ENCODE measurements at regions of chr3 and their contacts with region 1.

Region 1: DNA sequence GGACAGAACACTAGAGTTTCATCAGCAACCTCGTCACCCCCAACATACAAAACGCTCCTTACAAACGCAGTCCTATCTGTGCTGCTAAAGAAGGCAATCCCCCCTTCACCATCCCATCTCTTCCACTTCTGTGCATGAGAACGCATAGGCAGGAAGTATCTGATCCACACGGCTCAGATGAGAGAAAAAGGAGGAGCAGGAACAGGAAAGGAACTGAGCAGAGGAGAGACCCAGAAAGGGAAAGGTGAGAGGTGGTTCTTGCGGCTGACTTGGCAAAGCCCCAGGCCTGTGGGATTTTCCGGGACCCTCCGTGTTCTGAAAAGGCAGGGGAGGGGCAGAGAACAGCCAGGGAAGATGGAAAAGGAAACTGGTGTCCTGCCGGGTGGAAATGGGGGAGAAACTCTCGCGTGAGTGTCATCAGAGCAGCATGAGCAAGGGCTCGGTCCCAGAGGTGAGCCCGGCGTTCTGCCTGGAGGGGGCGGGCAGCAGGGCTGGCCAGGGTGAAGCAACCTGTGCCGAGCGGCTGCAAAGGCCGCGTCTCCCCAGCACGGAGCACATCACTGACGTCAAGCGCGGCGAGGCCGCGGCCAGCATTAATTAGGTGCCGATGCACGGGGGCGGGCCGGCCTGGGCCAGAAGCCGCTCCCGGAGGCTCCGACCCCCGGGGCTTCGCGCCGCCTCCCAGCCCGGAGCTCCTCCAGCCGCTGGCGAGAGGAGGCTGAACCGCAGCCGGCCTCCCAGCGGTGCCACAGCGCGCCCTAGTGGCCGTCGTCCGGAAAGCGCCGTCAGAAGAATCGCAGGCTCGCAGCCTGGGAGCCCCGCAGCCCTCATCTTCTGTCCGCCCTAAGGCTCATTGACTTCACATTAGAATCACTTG is 35.8 kb downstream of the CPN2 start:
- DNase-seq: peak; percentile 93 to 96 (median 95)
- ATAC-seq: peak; percentile 91 to 95
- H3K4me3 ChIP-seq: peak overlapping the region; percentile 41
- H3K27ac ChIP-seq: no peak overlapping the region
- H3K4me1 ChIP-seq: peaks cover 2% of the 10 kb centered on the region
- H3K27me3 ChIP-seq: no peaks in the 10 kb centered on the region

Region 2: GRCh38 chr3:193780810-193781472 is 534.4 kb before region 1 on chr3:
- intact Hi-C with region 1: loop called (anchors 2 to 5 kb)
- DNase-seq: peak; percentile 81 to 90 (median 89)
- ATAC-seq: peak; percentile 87 to 92
- H3K4me3 ChIP-seq: no peak overlapping the region
- H3K27ac ChIP-seq: no peak overlapping the region
- H3K4me1 ChIP-seq: peaks cover 2% of the 10 kb centered on the region
- H3K27me3 ChIP-seq: peaks cover 2% of the 10 kb centered on the region

Region 3: GRCh38 chr3:193788189-193788991 is 526.9 kb before region 1 on chr3:
- intact Hi-C with region 1: loop called (anchors 2 to 5 kb)
- DNase-seq: peak; percentile 73 to 89 (median 81)
- ATAC-seq: peak; percentile 93
- H3K4me3 ChIP-seq: no peak overlapping the region
- H3K27ac ChIP-seq: peak overlapping the region; percentile 2
- H3K4me1 ChIP-seq: peaks cover 3% of the 10 kb centered on the region
- H3K27me3 ChIP-seq: no peaks in the 10 kb centered on the region

Region 4: GRCh38 chr3:194003125-194004057 is 311.9 kb before region 1 on chr3:
- intact Hi-C with region 1: loop called in 1 of 4 experiments (anchors 10 kb)
- DNase-seq: peak; percentile 94 to 97 (median 96)
- ATAC-seq: peak; percentile 94
- H3K4me3 ChIP-seq: peak overlapping the region; percentile 31
- H3K27ac ChIP-seq: peak overlapping the region; percentile 83
- H3K4me1 ChIP-seq: peaks cover 5% of the 10 kb centered on the region
- H3K27me3 ChIP-seq: no peaks in the 10 kb centered on the region

Region 5: GRCh38 chr3:194141415-194142155 is 173.7 kb before region 1 on chr3:
- intact Hi-C with region 1: loop called (anchors 5 to 10 kb)
- DNase-seq: peak; percentile 95 to 97 (median 97)
- ATAC-seq: peak; percentile 85 to 91
- H3K4me3 ChIP-seq: peak overlapping the region; percentile 70
- H3K27ac ChIP-seq: peak overlapping the region; percentile 98
- H3K4me1 ChIP-seq: peaks cover 11% of the 10 kb centered on the region
- H3K27me3 ChIP-seq: no peaks in the 10 kb centered on the region

Region 6: DNA sequence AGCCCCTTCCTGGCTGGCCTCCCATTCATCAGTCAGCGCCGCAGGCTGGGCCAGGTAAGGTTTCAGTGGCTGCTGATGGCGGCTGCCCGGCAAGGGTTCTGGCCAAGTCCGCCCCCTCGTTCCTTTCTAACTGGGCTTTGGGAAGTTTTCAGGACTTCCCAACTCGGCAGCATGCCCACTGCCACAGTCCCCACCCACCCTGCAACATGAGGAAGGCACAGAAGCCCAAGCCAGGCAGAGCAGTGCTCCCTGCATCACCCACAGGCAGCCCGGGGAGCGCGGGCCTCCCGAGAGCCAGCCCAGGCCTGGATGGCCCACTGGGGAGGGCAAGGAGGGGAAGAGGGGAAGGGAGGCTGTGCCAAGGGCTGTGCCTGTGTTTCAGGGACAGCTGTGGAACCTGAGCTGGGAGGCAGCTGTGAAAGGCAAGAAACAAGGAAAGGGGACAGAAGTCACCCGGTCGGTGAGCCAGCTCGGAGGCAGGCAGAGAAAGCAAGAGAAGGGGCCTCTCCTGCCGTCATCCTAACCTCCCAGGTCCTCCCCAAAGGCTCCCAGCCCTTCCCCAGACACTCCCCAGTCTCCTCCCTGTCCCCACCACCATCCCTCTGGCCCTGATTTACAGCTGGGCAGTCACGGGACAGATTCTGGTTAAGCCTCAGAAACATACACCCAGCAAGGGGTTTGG is 38.1 kb before region 1 on chr3:
- intact Hi-C with region 1: loop called in 1 of 4 experiments (anchors 5 kb)
- DNase-seq: peak; percentile 83 to 91 (median 91)
- ATAC-seq: peak; percentile 80 to 85
- H3K4me3 ChIP-seq: no peak overlapping the region
- H3K27ac ChIP-seq: peak overlapping the region; percentile 5
- H3K4me1 ChIP-seq: peaks cover 13% of the 10 kb centered on the region
- H3K27me3 ChIP-seq: no peaks in the 10 kb centered on the region

Region 7: GRCh38 chr3:194654443-194654842 is 339.1 kb after region 1 on chr3:
- intact Hi-C with region 1: no loop called
- DNase-seq: no peak
- ATAC-seq: no peak
- H3K4me3 ChIP-seq: no peak overlapping the region
- H3K27ac ChIP-seq: no peak overlapping the region
- H3K4me1 ChIP-seq: no peaks in the 10 kb centered on the region
- H3K27me3 ChIP-seq: no peaks in the 10 kb centered on the region

Region 8: GRCh38 chr3:195150181-195151118 is 835.1 kb after region 1 on chr3:
- intact Hi-C with region 1: no loop called
- DNase-seq: peak; percentile 85 to 88 (median 87)
- ATAC-seq: peak; percentile 84 to 87
- H3K4me3 ChIP-seq: peak overlapping the region; percentile 3
- H3K27ac ChIP-seq: peak overlapping the region; percentile 91
- H3K4me1 ChIP-seq: peaks cover 21% of the 10 kb centered on the region
- H3K27me3 ChIP-seq: no peaks in the 10 kb centered on the region